ENCODE measurements at regions of chr2 and their contacts with region 1.

Region 1: DNA sequence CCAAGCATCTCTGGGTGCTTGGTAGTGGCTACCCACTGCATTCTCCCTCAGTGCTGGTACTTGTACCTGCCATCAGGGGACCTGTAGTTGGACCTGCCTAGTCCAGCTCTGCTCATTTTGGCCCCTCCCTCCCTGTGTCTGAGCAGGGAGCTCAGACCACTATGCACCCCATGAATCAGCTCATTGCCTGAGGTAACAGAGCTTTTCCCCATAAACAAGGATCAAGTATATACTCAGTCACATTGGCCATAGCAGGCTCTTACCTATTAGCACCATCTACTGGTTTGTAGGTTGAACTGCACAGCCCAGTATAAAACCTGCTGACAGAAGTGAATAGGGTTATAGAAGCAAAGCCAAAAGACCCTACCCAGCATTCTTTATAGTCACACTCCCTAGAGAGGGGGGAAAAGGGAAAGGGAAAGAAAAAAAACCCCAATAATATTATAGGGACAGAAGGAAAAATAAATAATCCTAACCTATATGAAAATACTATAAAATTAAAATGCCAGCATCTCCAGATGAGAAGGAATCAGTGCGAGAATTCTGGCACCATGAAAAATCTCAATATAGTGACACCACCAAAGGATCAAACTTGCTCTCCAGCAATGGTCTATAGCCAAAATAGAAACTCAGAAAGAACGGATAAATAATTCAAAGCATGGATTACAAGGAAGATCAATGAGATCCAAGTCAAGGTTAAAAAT is 6.9 kb upstream of the FLACC1 start:
- DNase-seq: peak; percentile 32
- CTCF ChIP-seq: peak; percentile 78

Region 2: DNA sequence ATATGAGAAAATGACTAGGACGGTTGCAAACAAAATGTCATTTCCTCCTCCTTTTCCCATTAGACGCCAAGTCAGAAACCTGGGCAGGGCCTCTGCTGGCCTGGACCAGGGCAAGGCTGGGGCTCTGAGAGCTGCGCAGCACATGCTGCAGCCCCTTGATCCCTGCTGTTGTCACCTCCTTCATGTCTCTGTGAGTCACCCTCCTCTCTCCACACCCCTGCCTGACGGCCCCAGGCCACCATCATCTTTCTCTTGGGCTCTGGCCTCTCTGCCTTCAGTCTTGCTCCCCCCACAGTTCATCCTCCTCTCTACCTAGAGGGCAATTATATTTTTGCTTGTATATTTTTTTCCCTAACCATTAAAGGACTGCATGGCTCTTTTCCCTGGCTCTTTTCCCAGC is 16.9 kb before region 1 on chr2:
- CTCF ChIA-PET with region 1: interaction called, 12 read pairs
- POLR2A ChIA-PET with region 1: no interaction called
- DNase-seq: no peak
- CTCF ChIP-seq: no peak

Region 3: GRCh38 chr2:201378496-201379397 is 14.7 kb after region 1 on chr2:
- CTCF ChIA-PET with region 1: interaction called, 16 read pairs
- POLR2A ChIA-PET with region 1: no interaction called
- DNase-seq: no peak
- CTCF ChIP-seq: no peak